IMR-90 (cell line): ENCODE measurements at regions of chr15 and their contacts with region 1.

Region 1: DNA sequence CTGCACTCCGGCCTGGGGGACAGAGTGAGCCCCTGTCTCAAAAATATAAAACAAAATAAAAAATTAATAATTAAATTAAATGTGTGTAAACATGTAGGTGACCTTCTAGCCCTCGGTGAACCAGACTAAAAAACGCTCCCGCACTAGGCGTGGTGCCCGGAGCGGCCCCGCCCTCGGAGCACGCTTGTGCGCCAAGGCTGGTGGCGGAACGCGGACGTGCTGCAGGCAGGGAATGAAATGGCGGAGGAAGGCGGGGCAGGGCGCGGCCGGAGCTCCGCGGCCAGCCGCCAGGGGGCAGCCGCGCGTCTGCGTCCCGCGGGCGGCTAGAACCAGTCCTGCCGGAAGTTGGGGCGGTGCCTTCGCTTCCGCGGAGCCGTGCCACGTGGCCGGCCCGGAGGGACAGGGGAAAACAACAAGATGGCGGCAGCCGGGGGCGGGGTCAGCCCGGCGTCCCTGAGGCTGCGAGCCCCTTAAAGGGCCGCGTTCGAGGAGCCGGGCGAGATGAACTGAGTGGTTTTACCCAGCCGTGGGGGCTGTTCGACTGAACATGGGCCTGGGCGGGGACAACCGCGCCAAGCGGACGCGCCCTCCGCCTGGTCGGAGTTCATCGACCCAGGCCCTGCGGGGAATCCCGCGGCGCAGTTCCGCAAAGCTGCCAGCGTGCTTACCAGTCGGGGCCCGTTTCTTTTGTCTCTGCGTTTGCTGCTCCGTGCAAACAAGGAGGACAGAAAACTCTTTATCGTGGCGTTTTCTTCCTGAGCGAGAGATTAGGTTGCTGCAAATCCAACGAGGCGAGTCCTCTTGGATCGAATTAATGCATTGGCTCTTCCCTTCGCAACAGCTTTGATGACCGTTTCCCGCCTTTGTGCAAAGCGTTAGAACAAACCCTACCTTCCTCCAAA is 90.9 kb upstream of the CHD2 start:
- DNase-seq: peak; percentile 96
- ATAC-seq: peak; percentile 77
- H3K4me3 ChIP-seq: peak overlapping the region; percentile 44
- H3K27ac ChIP-seq: peak overlapping the region; percentile 91
- H3K4me1 ChIP-seq: peaks cover 11% of the 10 kb centered on the region
- H3K27me3 ChIP-seq: no peaks in the 10 kb centered on the region
- CTCF ChIP-seq: peak; percentile 98
- POLR2A ChIP-seq: peak; percentile 71; the same call in 1 of the 2 replicates
- RAD21 ChIP-seq: peak; percentile 91

Region 2: GRCh38 chr15:92751524-92751923 is 57.7 kb before region 1 on chr15:
- CTCF ChIA-PET with region 1: no interaction called
- POLR2A ChIA-PET with region 1: no interaction called
- dilution Hi-C with region 1: no loop called
- in situ Hi-C with region 1: no loop called
- intact Hi-C with region 1: no loop called
- DNase-seq: no peak
- ATAC-seq: no peak
- H3K4me3 ChIP-seq: no peak overlapping the region
- H3K27ac ChIP-seq: no peak overlapping the region
- H3K4me1 ChIP-seq: no peaks in the 10 kb centered on the region
- H3K27me3 ChIP-seq: no peaks in the 10 kb centered on the region
- CTCF ChIP-seq: no peak
- POLR2A ChIP-seq: no peak
- RAD21 ChIP-seq: no peak

Region 3: DNA sequence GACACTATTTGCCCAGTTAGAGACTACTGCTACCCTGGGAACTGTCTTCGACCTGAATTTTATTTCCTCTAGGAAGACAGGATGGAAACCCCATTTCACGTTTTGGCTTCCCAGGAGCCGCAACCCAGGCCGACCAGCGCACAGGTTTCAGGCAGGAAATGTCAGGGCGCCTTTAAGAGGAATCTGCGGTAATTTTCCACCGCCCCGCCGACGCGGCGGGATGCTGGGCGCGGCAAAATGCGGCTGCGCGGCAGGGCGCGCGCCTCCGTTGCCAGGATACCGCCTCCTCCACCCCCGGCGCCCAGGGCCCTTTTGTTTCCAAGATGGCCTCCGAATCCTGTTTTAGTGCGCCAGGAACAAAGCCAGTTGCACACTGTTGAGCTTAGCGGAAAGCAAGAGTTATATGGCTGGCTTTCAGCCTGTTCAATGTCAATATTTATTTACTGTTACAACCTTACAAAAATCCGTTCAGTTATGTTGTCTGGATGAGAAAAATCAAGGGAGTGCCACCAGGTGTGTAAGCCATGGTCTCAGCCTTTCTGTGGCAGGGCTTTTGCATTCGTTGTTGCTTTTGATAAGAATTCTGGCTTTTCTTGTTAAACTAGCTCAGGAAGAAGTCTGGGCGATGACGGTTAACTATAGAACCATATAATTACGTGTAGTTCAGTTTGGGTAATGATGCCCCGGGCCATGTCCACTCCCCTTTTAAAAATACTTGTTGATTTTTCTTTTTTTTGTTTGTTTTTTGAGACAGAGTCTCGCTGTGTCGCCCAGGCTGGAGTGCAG is 11.2 kb after region 1 on chr15:
- CTCF ChIA-PET with region 1: interaction called, 4 read pairs
- POLR2A ChIA-PET with region 1: interaction called, 7 read pairs
- dilution Hi-C with region 1: no loop called
- in situ Hi-C with region 1: no loop called
- intact Hi-C with region 1: loop called (anchors 1 kb)
- DNase-seq: peak; percentile 89
- ATAC-seq: peak; percentile 91
- H3K4me3 ChIP-seq: peak overlapping the region; percentile 42
- H3K27ac ChIP-seq: peak overlapping the region; percentile 87
- H3K4me1 ChIP-seq: peaks cover 13% of the 10 kb centered on the region
- H3K27me3 ChIP-seq: no peaks in the 10 kb centered on the region
- CTCF ChIP-seq: no peak
- POLR2A ChIP-seq: peak; percentile 66; the same call in 1 of the 2 replicates
- RAD21 ChIP-seq: no peak

Region 4: DNA sequence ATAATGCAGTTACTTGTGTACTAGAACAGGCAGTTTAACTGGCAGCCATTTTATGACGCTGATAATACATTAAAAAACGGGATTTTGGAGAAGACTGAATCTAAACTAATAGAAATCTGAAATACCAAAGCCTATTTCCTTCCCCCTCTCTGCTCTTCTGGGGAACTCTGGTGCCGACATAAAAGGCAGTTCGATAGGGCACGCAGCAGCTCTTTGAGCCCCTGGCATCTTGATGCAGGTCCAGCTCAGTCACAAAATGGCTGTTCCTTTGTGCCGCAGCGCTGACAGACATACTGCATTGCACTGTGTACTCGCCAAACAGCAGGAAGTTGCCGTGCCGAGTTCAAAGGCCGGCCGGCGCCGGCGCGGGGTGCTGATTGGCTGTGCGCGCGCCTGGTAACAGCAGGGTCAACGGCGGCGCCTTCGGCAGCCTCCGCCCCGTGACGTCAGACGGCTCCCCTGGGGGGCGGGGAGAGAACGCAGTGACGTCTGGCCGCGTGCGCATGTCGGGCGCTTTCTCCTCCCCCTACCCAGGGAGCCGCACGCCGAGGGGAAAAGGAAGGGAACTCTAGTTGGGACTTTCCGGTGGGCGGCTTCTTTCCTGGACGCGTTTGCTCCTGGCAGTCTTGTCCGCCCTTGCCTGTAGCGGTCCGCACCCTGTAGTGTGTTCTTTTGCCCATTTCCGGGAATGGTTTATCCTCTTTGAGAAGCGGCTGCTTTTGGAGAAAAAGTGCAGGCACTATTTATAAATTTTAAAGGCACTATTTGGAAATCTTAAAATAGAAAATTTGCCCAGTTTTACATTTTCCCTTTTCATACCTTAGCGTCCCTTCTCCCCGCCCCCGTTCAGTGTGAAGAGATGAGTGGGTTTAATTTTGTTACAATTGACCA is 95.0 kb after region 1 on chr15:
- CTCF ChIA-PET with region 1: interaction called, 7 read pairs
- POLR2A ChIA-PET with region 1: interaction called, 7 read pairs
- dilution Hi-C with region 1: no loop called
- in situ Hi-C with region 1: no loop called
- intact Hi-C with region 1: loop called (anchors 1 kb)
- DNase-seq: peak; percentile 98
- ATAC-seq: peak; percentile 85
- H3K4me3 ChIP-seq: peak overlapping the region; percentile 54
- H3K27ac ChIP-seq: peak overlapping the region; percentile 98
- H3K4me1 ChIP-seq: peaks cover 11% of the 10 kb centered on the region
- H3K27me3 ChIP-seq: no peaks in the 10 kb centered on the region
- CTCF ChIP-seq: no peak
- POLR2A ChIP-seq: peak; percentile 98
- RAD21 ChIP-seq: no peak

Region 5: GRCh38 chr15:92930776-92931175 is 121.5 kb after region 1 on chr15:
- CTCF ChIA-PET with region 1: no interaction called
- POLR2A ChIA-PET with region 1: interaction called, 10 read pairs
- dilution Hi-C with region 1: loop called (anchors 25 kb)
- in situ Hi-C with region 1: no loop called
- intact Hi-C with region 1: no loop called
- DNase-seq: peak; percentile 93
- ATAC-seq: peak; percentile 88
- H3K4me3 ChIP-seq: no peak overlapping the region
- H3K27ac ChIP-seq: peak overlapping the region; percentile 46; the same call in 1 of the 2 replicates
- H3K4me1 ChIP-seq: peaks cover 13% of the 10 kb centered on the region
- H3K27me3 ChIP-seq: no peaks in the 10 kb centered on the region
- CTCF ChIP-seq: no peak
- POLR2A ChIP-seq: no peak
- RAD21 ChIP-seq: no peak

Region 6: DNA sequence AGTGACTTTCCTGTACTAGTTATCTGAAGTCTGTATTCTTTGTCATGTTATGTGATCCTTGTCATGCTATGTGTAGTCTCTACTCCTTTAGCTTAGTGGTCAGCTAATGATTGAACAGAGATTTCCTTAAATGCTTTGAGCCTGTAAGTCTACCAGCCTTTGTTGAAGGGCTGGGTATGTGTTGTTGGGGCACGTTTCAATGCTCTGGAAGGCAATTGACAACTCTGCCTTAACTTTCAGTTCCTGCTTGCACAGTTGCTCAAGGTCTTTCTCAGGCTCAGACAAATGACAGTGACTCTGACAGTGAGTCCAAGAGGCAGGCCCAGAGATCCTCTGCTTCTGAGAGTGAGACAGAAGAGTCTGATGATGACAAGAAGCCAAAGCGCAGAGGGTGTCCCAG is 180.2 kb after region 1 on chr15:
- CTCF ChIA-PET with region 1: no interaction called
- POLR2A ChIA-PET with region 1: no interaction called
- dilution Hi-C with region 1: no loop called
- in situ Hi-C with region 1: no loop called
- intact Hi-C with region 1: loop called (anchors 10 kb)
- DNase-seq: no peak
- ATAC-seq: no peak
- H3K4me3 ChIP-seq: no peak overlapping the region
- H3K27ac ChIP-seq: no peak overlapping the region
- H3K4me1 ChIP-seq: no peaks in the 10 kb centered on the region
- H3K27me3 ChIP-seq: no peaks in the 10 kb centered on the region
- CTCF ChIP-seq: no peak
- POLR2A ChIP-seq: no peak
- RAD21 ChIP-seq: no peak